HEK293 (cell line): ENCODE measurements at regions of chr9 and their contacts with region 1.

Region 1: GRCh38 chr9:15873569-15874177 is 320.8 kb downstream of the CCDC171 start:
- H3K4me3 ChIP-seq: no peak overlapping the region
- H3K27ac ChIP-seq: no peak overlapping the region
- H3K4me1 ChIP-seq: no peaks in the 10 kb centered on the region
- CTCF ChIP-seq: 0 out of 2 replicates have a peak, but pooled peaks have one; percentile 14

Region 2: GRCh38 chr9:15670884-15671283 is 202.8 kb before region 1 on chr9:
- CTCF ChIA-PET with region 1: no interaction called
- POLR2A ChIA-PET with region 1: no interaction called
- H3K4me3 ChIP-seq: no peak overlapping the region
- H3K27ac ChIP-seq: no peak overlapping the region
- H3K4me1 ChIP-seq: no peaks in the 10 kb centered on the region
- CTCF ChIP-seq: no peak

Region 3: GRCh38 chr9:15813076-15813475 is 60.6 kb before region 1 on chr9:
- CTCF ChIA-PET with region 1: no interaction called
- POLR2A ChIA-PET with region 1: no interaction called
- H3K4me3 ChIP-seq: no peak overlapping the region
- H3K27ac ChIP-seq: no peak overlapping the region
- H3K4me1 ChIP-seq: no peaks in the 10 kb centered on the region
- CTCF ChIP-seq: no peak

Region 4: DNA sequence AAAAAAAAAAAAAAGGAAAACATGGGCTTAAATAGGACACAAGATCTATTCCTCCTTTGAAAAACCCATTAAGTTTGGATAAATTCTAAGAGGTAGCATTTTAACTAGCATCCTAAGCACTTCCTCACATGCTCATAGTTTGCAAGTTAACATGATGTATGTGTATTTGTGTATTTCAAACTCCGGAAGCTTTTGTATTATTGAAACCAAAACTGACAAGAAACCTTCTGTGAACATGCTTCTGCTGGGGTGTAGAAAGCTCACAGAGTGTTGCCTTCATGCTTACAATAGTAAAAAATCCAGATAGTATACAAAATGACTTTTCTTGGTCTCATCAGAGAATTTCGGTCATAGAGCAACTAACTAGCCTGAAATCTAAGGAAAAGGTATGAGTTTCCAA is 1809.0 kb after region 1 on chr9:
- CTCF ChIA-PET with region 1: interaction called, 13 read pairs
- POLR2A ChIA-PET with region 1: no interaction called
- H3K4me3 ChIP-seq: no peak overlapping the region
- H3K27ac ChIP-seq: no peak overlapping the region
- H3K4me1 ChIP-seq: no peaks in the 10 kb centered on the region
- CTCF ChIP-seq: no peak